H1 (cell line): ENCODE measurements at regions of chr6 and their contacts with region 1.

Region 1: GRCh38 chr6:110528101-110528929 is 51.9 kb upstream of the SLC22A16 start:
- DNase-seq: peak in 1 of 2 experiments; percentile 52
- H3K4me3 ChIP-seq: no peak overlapping the region
- H3K27ac ChIP-seq: no peak overlapping the region
- H3K4me1 ChIP-seq: peaks cover 0 to 2% (median 0%) of the 10 kb centered on the region in 4 experiments; a peak in 1 of 7 replicates
- H3K27me3 ChIP-seq: no peaks in the 10 kb centered on the region
- CTCF ChIP-seq: peak in 2 of 3 experiments; percentile 63 to 69; a peak in 3 of 4 replicates
- EP300 ChIP-seq: no peak
- POLR2A ChIP-seq: no peak
- RAD21 ChIP-seq: peak; percentile 89 to 92

Region 2: GRCh38 chr6:110158479-110158878 is 369.8 kb before region 1 on chr6:
- CTCF ChIA-PET with region 1: no interaction called
- POLR2A ChIA-PET with region 1: no interaction called
- DNase-seq: no peak
- H3K4me3 ChIP-seq: no peak overlapping the region
- H3K27ac ChIP-seq: no peak overlapping the region
- H3K4me1 ChIP-seq: no peaks in the 10 kb centered on the region
- H3K27me3 ChIP-seq: no peaks in the 10 kb centered on the region
- CTCF ChIP-seq: no peak
- EP300 ChIP-seq: no peak
- POLR2A ChIP-seq: no peak
- RAD21 ChIP-seq: no peak

Region 3: GRCh38 chr6:110517601-110518281 is 10.6 kb before region 1 on chr6:
- CTCF ChIA-PET with region 1: interaction called, 12 read pairs
- POLR2A ChIA-PET with region 1: no interaction called
- DNase-seq: no peak
- H3K4me3 ChIP-seq: no peak overlapping the region
- H3K27ac ChIP-seq: no peak overlapping the region
- H3K4me1 ChIP-seq: peaks cover 0 to 3% (median 0%) of the 10 kb centered on the region in 4 experiments; a peak in 3 of 7 replicates
- H3K27me3 ChIP-seq: no peaks in the 10 kb centered on the region
- CTCF ChIP-seq: no peak
- EP300 ChIP-seq: no peak
- POLR2A ChIP-seq: no peak
- RAD21 ChIP-seq: no peak